Ovary (tissue), 10 donors: ENCODE measurements at regions of chr1 and their contacts with region 1.

Region 1: DNA sequence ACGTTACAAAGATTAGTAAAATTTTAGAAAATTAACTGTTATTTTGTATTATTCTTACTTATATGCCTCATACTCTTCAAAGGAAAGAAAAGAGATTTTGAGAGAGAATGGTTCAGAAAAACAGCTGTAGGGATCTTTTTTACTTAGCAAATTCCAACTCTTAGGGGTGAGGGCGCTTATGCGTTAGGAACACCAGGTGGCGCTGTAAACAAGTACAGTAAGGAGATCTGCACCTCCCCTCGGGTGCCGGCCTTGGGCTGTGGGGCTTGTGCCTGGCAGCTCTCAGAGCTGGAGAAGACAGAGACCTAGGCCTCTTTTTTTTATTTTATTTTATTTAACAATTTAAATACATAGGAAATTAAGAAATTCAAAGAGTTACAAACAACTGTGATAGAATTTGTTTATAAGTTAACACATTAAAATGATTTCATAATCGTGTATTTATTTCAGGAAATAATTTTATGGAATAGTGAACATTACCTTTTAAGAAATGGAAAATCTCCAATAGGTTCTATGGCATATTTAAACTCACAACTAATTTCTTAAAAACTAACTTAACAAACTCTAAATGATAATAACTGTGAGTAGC is 32.6 kb downstream of the UTP25 start:
- DNase-seq: peak; percentile 71 to 83 (median 76)
- H3K4me3 ChIP-seq: no peak overlapping the region
- H3K27ac ChIP-seq: no peak overlapping the region
- H3K4me1 ChIP-seq: no peaks in the 10 kb centered on the region
- H3K27me3 ChIP-seq: no peaks in the 10 kb centered on the region
- CTCF ChIP-seq: peak; percentile 47 to 67 (median 54)
- EP300 ChIP-seq: no peak
- POLR2A ChIP-seq: no peak

Region 2: DNA sequence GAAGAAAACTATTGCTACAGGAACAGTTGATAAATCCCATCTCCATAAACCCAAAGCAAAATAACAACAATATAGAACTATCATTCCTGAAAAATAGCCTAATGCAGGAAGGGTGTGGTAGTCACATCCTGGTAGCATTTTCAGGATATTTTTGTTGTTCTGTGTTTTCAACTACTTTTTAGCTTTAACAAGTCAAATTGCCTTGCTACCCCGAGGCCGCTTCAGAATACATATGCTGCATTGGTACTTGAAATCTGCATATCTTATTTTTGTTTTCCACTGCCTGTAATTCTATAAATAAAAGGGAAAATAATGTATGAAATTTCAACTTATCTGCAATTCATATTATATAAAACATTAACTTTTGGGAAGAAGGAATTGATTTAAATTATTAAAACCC is 40.8 kb after region 1 on chr1:
- intact Hi-C with region 1: no loop called
- DNase-seq: no peak
- H3K4me3 ChIP-seq: no peak overlapping the region
- H3K27ac ChIP-seq: no peak overlapping the region
- H3K4me1 ChIP-seq: no peaks in the 10 kb centered on the region
- H3K27me3 ChIP-seq: no peaks in the 10 kb centered on the region
- CTCF ChIP-seq: no peak
- EP300 ChIP-seq: no peak
- POLR2A ChIP-seq: no peak

Region 3: GRCh38 chr1:209989525-209989924 is 129.1 kb after region 1 on chr1:
- intact Hi-C with region 1: loop called (anchors 5 to 10 kb)
- DNase-seq: no peak
- H3K4me3 ChIP-seq: no peak overlapping the region
- H3K27ac ChIP-seq: no peak overlapping the region
- H3K4me1 ChIP-seq: no peaks in the 10 kb centered on the region
- H3K27me3 ChIP-seq: no peaks in the 10 kb centered on the region
- CTCF ChIP-seq: no peak
- EP300 ChIP-seq: no peak
- POLR2A ChIP-seq: no peak

Region 4: DNA sequence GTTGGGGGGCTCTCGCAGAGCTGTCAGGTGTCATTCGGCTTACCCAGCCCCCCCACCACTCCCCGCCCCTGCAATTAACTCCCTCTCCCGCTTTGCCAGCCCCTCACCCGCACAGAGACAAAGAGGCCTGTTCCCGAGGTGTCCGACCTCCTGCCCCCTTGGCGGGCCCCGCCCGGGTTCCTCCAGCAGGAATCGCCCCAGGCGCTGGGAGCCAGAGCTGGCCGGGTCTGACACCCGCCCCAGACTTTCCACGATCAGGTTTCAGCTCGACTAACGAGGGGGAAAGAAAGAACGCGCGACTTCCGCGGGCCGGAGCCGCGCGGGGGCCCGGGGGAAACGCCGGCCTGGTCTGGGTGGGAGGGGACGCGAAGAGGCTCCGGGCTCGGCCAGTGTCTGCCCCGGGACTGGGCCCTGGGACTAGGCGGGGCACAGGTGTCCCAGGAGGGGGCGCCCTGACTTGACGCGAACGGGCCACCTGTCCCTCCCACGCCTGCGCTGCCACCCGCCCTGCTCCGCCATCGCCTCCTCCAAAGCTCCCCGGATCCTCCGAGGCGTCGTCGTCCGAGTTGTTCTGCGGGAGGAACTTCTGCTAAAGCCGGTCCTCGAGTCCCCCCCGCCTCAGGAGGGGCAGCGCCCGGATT is 432.0 kb after region 1 on chr1:
- intact Hi-C with region 1: loop called in 1 of 4 experiments (anchors 10 kb)
- DNase-seq: peak; percentile 49 to 71 (median 62)
- H3K4me3 ChIP-seq: peak overlapping the region; percentile 42
- H3K27ac ChIP-seq: peak overlapping the region; percentile 68 to 86
- H3K4me1 ChIP-seq: peaks cover 8% of the 10 kb centered on the region
- H3K27me3 ChIP-seq: no peaks in the 10 kb centered on the region
- CTCF ChIP-seq: peak in 1 of 3 donors; percentile 21
- EP300 ChIP-seq: no peak
- POLR2A ChIP-seq: no peak